Activated CD4-positive, alpha-beta T cell treated with anti-CD3 and anti-CD28 coated beads for 36 hours (primary cell): ENCODE measurements at regions of chr2 and their contacts with region 1.

Region 1: GRCh38 chr2:234425619-234426603 is 71.0 kb downstream of the ARL4C start:
- DNase-seq: peak; percentile 73
- ATAC-seq: peak; percentile 62
- H3K4me3 Mint-ChIP-seq: peak overlapping the region; percentile 60
- H3K27ac Mint-ChIP-seq: peak overlapping the region; percentile 97
- H3K4me1 Mint-ChIP-seq: peaks cover 90% of the 10 kb centered on the region
- H3K27me3 Mint-ChIP-seq: no peaks in the 10 kb centered on the region

Region 2: DNA sequence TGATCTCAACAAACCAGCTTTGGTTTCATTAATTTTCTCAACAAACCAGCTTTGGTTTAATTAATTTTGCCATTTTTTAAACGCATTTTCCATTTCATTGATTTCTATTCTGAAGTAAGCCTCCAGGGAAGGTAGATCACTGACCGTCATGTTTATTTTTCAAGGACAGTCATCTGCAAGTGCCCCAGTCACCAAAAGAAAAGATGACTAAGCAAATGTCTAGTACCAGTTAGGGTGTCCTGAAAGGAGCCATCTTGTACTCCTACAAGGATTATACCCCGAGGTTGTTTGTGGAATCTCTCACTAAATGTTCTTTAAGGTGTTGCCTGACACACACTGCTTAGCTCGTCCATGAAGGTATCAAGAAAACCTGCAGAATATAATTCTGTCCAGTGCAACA is 814.6 kb before region 1 on chr2:
- CTCF ChIA-PET with region 1: no interaction called
- POLR2A ChIA-PET with region 1: no interaction called
- intact Hi-C with region 1: no loop called
- DNase-seq: no peak
- ATAC-seq: no peak
- H3K4me3 Mint-ChIP-seq: no peak overlapping the region
- H3K27ac Mint-ChIP-seq: no peak overlapping the region
- H3K4me1 Mint-ChIP-seq: no peaks in the 10 kb centered on the region
- H3K27me3 Mint-ChIP-seq: peaks cover 17% of the 10 kb centered on the region

Region 3: GRCh38 chr2:234135720-234136221 is 290.1 kb before region 1 on chr2:
- CTCF ChIA-PET with region 1: interaction called, 3 read pairs
- POLR2A ChIA-PET with region 1: no interaction called
- intact Hi-C with region 1: loop called in 1 of 2 experiments (anchors 10 kb)
- DNase-seq: peak; percentile 72
- ATAC-seq: peak; percentile 87
- H3K4me3 Mint-ChIP-seq: no peak overlapping the region
- H3K27ac Mint-ChIP-seq: no peak overlapping the region
- H3K4me1 Mint-ChIP-seq: peaks cover 23% of the 10 kb centered on the region
- H3K27me3 Mint-ChIP-seq: no peaks in the 10 kb centered on the region

Region 4: DNA sequence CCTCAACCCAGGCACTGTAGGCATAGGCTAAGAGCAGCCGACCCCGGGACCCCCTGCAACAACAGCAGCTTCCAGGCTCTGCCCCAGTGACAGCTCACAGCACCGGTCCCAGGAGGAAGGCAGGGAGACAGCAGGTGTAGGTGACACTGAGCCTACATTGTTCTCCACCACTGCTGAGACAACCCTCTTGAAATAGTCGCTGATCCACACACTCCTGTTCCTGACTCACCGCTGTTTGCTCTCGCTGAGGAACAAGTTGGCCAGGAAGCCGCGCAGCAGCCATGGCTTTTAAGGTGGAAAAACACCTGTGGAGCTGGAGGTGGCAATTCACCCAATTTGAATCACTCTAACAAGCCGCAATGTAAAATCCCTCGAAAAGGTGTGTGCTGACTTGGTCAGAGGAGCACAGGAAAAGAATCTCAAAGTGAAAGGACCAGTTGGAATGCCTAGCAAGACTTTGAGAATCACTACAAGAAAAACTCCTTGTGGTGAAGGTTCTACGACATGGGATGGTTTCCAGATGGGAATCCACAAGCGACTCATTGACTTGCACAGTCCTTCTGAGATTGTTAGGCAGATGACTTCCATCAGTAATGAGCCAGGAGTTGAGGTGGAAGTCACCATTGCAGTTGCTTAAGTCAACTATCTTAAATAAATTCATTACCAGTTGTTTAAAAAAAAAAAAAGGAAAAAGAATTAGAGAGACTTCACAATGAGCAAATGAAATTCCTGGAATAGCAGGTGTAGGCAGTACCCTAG is 96.5 kb before region 1 on chr2:
- CTCF ChIA-PET with region 1: no interaction called
- POLR2A ChIA-PET with region 1: no interaction called
- intact Hi-C with region 1: no loop called
- DNase-seq: no peak
- ATAC-seq: no peak
- H3K4me3 Mint-ChIP-seq: no peak overlapping the region
- H3K27ac Mint-ChIP-seq: no peak overlapping the region
- H3K4me1 Mint-ChIP-seq: peaks cover 27% of the 10 kb centered on the region
- H3K27me3 Mint-ChIP-seq: no peaks in the 10 kb centered on the region

Region 5: GRCh38 chr2:234368861-234369261 is 57.0 kb before region 1 on chr2:
- CTCF ChIA-PET with region 1: interaction called, 3 read pairs
- POLR2A ChIA-PET with region 1: interaction called, 6 read pairs
- intact Hi-C with region 1: loop called (anchors 1 to 5 kb)
- DNase-seq: peak; percentile 71
- ATAC-seq: peak; percentile 83
- H3K4me3 Mint-ChIP-seq: no peak overlapping the region
- H3K27ac Mint-ChIP-seq: peak overlapping the region; percentile 84
- H3K4me1 Mint-ChIP-seq: peaks cover 73% of the 10 kb centered on the region
- H3K27me3 Mint-ChIP-seq: no peaks in the 10 kb centered on the region

Region 6: GRCh38 chr2:234437642-234438304 is 11.9 kb after region 1 on chr2:
- CTCF ChIA-PET with region 1: interaction called, 4 read pairs
- POLR2A ChIA-PET with region 1: interaction called, 3 read pairs
- intact Hi-C with region 1: loop called in 1 of 2 experiments (anchors 1 kb)
- DNase-seq: no peak
- ATAC-seq: no peak
- H3K4me3 Mint-ChIP-seq: no peak overlapping the region
- H3K27ac Mint-ChIP-seq: peak overlapping the region; percentile 53
- H3K4me1 Mint-ChIP-seq: peaks cover 70% of the 10 kb centered on the region
- H3K27me3 Mint-ChIP-seq: no peaks in the 10 kb centered on the region

Region 7: DNA sequence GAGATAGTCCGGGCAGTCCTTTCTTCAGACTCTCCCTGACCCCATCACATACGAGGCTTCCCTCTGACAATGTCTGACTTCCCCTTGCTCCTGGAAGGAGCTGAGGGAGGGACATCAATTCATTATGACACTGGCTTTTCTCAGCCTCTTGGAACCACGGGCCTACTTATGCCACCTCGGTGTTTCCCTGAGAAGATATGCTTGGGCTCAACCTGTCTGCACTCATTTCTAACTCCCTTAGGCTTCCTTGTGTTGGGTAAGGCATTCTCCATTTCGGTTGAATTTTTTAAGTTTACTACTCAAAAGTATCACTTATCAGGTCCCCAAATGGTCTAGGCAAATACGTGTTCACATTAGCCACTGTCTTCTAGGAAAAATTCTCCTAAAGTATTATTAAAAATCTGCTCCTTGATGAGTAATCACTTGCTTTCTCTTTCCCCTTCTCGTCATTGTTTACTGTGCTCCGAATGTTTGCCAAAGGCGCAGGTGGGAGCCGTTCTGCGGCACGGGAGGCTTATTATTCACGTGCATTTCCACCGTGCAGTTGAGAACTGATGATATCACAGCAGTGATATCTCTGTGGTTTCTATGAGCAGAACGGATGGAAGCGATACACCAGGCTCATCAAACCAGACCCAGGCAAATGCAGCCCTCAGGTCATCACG is 37.8 kb after region 1 on chr2:
- CTCF ChIA-PET with region 1: interaction called, 4 read pairs
- POLR2A ChIA-PET with region 1: interaction called, 5 read pairs
- intact Hi-C with region 1: loop called in 1 of 2 experiments (anchors 5 kb)
- DNase-seq: peak; percentile 85
- ATAC-seq: peak; percentile 82
- H3K4me3 Mint-ChIP-seq: peak overlapping the region; percentile 56
- H3K27ac Mint-ChIP-seq: peak overlapping the region; percentile 81
- H3K4me1 Mint-ChIP-seq: peaks cover 76% of the 10 kb centered on the region
- H3K27me3 Mint-ChIP-seq: no peaks in the 10 kb centered on the region

Region 8: GRCh38 chr2:234488913-234489451 is 63.1 kb after region 1 on chr2:
- CTCF ChIA-PET with region 1: interaction called, 4 read pairs
- POLR2A ChIA-PET with region 1: interaction called, 4 read pairs
- intact Hi-C with region 1: loop called (anchors 2 kb)
- DNase-seq: peak; percentile 81
- ATAC-seq: peak; percentile 71
- H3K4me3 Mint-ChIP-seq: peak overlapping the region; percentile 71
- H3K27ac Mint-ChIP-seq: peak overlapping the region; percentile 97
- H3K4me1 Mint-ChIP-seq: peaks cover 85% of the 10 kb centered on the region
- H3K27me3 Mint-ChIP-seq: no peaks in the 10 kb centered on the region